Activated naive CD4-positive, alpha-beta T cell treated with anti-CD3 and anti-CD28 coated beads for 36 hours (primary cell): ENCODE measurements at regions of chr12 and their contacts with region 1.

Region 1: DNA sequence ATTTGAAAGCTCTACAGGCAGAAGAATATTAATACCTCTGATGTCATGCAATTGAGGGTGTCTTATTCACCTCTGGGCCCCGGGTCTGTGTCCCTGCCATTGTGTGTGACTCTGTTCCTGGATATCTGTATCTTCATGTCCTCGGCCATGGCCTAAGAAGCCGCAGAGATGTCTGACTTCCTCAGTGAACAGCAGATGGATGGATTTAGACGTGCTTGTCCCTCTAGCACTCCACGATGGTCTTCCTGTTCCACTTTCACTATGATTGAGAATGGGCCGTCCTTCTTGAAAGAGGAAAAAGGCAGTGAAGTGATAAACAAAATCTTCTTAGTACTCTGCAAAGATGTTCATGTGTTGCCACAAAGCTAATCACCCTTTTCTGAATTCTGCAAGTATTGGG is 217.4 kb downstream of the SLC41A2 start:
- DNase-seq: peak; percentile 49
- H3K4me3 Mint-ChIP-seq: peak overlapping the region; percentile 53
- H3K27ac Mint-ChIP-seq: peak overlapping the region; percentile 60
- H3K4me1 Mint-ChIP-seq: peaks cover 52% of the 10 kb centered on the region
- H3K27me3 Mint-ChIP-seq: no peaks in the 10 kb centered on the region

Region 2: GRCh38 chr12:104805186-104805585 is 64.5 kb after region 1 on chr12:
- CTCF ChIA-PET with region 1: no interaction called
- intact Hi-C with region 1: no loop called
- DNase-seq: no peak
- H3K4me3 Mint-ChIP-seq: no peak overlapping the region
- H3K27ac Mint-ChIP-seq: no peak overlapping the region
- H3K4me1 Mint-ChIP-seq: no peaks in the 10 kb centered on the region
- H3K27me3 Mint-ChIP-seq: no peaks in the 10 kb centered on the region

Region 3: GRCh38 chr12:104877123-104877705 is 136.5 kb after region 1 on chr12:
- CTCF ChIA-PET with region 1: no interaction called
- intact Hi-C with region 1: loop called (anchors 2 kb)
- DNase-seq: peak; percentile 59
- H3K4me3 Mint-ChIP-seq: no peak overlapping the region
- H3K27ac Mint-ChIP-seq: no peak overlapping the region
- H3K4me1 Mint-ChIP-seq: peaks cover 3% of the 10 kb centered on the region
- H3K27me3 Mint-ChIP-seq: peaks cover 2% of the 10 kb centered on the region